ENCODE measurements at regions of chr12 and their contacts with region 1.

Region 1: DNA sequence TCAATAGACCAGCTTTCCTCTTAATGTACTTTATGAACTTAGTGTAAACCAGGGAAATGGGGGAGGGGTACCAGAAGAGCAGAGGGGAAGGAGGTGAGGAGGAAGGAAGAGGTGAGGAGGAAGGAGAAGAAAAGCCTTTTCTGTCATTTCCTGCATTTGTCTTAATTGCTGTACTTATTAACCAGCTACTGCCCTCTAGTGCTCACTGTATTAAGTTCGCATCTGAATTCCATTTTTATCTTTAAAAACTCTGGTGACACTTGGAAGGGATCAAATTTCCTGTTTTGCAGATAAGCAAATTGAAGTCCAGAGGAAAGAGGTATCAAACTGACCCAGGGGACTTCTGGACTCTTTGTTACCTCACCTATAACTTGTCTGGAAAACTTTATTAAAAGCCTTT is 22.2 kb downstream of the MANSC1 start:
- DNase-seq: peak in 2 of 7 donors; percentile 13 to 33
- H3K4me3 ChIP-seq: no peak overlapping the region
- H3K27ac ChIP-seq: no peak overlapping the region
- H3K4me1 ChIP-seq: no peaks in the 10 kb centered on the region
- H3K27me3 ChIP-seq: no peaks in the 10 kb centered on the region
- CTCF ChIP-seq: peak; percentile 47 to 75 (median 72)
- POLR2A ChIP-seq: no peak

Region 2: DNA sequence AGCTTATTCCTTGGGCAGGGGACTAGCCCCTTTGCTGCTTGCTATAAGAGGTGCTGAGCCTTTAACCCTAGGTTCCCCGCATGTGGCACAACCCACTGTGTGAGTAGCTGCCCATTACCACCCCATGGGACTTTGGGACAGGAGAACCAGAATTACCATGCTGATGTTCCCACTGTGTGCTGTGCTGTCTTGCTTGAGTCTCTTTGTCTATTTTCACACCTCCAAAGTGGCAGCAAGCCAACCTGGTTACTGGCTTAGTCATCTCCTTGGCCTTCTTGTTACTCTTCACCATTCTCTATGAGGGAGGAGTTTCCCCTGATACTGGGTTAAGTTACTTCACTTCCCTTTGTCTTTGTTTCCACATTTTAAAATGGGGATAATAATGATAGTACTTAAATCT is 751.7 kb before region 1 on chr12:
- intact Hi-C with region 1: loop called in 1 of 2 experiments (anchors 10 kb)
- DNase-seq: peak in 1 of 7 donors; percentile 12
- H3K4me3 ChIP-seq: no peak overlapping the region
- H3K27ac ChIP-seq: no peak overlapping the region
- H3K4me1 ChIP-seq: no peaks in the 10 kb centered on the region
- H3K27me3 ChIP-seq: no peaks in the 10 kb centered on the region
- CTCF ChIP-seq: no peak
- POLR2A ChIP-seq: no peak

Region 3: DNA sequence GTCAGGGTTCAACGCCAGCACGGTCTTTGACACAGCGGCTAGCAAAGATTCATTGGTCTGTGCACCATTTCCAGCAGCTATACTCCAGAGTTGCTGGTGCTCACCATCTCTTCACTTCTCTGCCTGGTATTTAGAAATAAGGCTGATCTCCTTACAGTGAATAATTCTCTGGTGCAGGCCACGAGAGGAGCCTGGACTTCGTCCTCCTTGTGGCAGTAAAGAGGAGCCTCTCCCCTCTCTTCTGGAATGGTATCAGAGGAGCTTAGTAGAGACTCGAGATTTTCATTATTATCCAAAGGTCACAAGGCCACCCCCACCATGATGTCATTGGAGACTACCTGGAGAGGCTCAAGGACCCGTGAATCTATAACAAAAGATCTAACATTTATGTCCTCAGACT is 287.9 kb before region 1 on chr12:
- intact Hi-C with region 1: loop called in 1 of 2 experiments (anchors 5 kb)
- DNase-seq: no peak
- H3K4me3 ChIP-seq: no peak overlapping the region
- H3K27ac ChIP-seq: no peak overlapping the region
- H3K4me1 ChIP-seq: no peaks in the 10 kb centered on the region
- H3K27me3 ChIP-seq: no peaks in the 10 kb centered on the region
- CTCF ChIP-seq: no peak
- POLR2A ChIP-seq: no peak

Region 4: GRCh38 chr12:12533238-12533829 is 205.5 kb after region 1 on chr12:
- intact Hi-C with region 1: no loop called
- DNase-seq: peak; percentile 65 to 86 (median 80)
- H3K4me3 ChIP-seq: no peak overlapping the region
- H3K27ac ChIP-seq: peak overlapping the region; percentile 52 to 85 (median 81)
- H3K4me1 ChIP-seq: peaks cover 32 to 68% of the 10 kb centered on the region in 2 donors
- H3K27me3 ChIP-seq: no peaks in the 10 kb centered on the region
- CTCF ChIP-seq: no peak
- POLR2A ChIP-seq: peak in 1 of 2 donors; percentile 8

Region 5: DNA sequence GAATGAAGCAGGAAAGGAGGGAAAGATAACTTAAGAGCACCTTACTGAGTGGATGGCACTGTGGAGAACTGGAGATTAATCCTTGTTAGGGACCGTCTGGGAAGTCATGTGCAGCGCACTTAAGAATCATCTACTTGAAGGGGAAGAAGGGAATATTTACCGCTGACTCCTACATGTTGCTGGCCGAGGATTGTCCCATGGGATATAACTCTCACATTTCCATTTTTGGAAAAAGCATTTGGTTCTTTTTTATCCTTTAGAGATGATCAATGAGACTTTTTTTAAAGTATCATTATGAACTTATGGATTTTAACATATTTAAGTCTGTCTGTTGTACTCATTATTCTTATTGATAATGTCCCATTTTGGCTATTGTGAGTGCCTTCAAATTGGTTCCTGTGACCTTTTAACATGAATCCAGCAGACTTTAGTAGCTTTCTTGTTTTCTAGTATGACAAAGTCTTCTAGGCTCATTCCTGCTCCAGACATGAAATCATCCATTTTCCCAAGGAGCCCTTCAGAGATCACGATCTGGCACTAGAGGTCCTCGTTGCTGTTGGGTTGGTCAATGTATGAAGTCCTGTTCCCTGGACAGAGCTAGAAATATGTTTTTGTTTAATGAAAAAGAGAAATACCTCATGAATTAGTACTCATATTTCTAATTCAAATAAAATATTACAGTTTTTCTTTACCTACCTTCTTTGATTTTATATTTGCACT is 696.2 kb after region 1 on chr12:
- intact Hi-C with region 1: no loop called
- DNase-seq: peak in 4 of 7 donors; percentile 20 to 51 (median 40)
- H3K4me3 ChIP-seq: no peak overlapping the region
- H3K27ac ChIP-seq: no peak overlapping the region
- H3K4me1 ChIP-seq: no peaks in the 10 kb centered on the region
- H3K27me3 ChIP-seq: no peaks in the 10 kb centered on the region
- CTCF ChIP-seq: peak in 3 of 6 experiments; percentile 22 to 45 (median 41)
- POLR2A ChIP-seq: no peak